ENCODE measurements at regions of chrX and their contacts with region 1.

Region 1: DNA sequence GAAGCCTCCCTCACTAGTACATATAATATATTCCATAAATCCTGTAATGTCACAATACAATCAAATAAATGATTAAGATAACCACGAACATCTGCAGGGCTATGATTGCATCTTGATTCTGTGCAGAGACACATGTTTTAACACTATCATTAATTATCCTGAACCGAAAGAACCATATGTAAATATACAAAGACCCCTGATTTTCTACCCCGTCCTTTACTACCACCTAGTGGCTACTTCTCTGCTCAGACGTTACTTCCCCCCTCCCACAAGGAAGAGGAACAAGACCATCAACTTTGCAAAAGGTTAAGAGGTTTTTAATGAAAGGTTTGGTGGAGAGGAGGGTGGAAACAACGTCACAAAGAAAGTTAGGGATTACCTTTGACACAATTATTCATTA is 134.0 kb downstream of the COL4A6 start:
- DNase-seq: no peak
- H3K4me3 ChIP-seq: no peak overlapping the region
- H3K27ac ChIP-seq: no peak overlapping the region
- H3K4me1 ChIP-seq: no peaks in the 10 kb centered on the region
- H3K27me3 ChIP-seq: no peaks in the 10 kb centered on the region
- CTCF ChIP-seq: peak in 2 of 4 experiments; percentile 20 to 24
- POLR2A ChIP-seq: no peak

Region 2: DNA sequence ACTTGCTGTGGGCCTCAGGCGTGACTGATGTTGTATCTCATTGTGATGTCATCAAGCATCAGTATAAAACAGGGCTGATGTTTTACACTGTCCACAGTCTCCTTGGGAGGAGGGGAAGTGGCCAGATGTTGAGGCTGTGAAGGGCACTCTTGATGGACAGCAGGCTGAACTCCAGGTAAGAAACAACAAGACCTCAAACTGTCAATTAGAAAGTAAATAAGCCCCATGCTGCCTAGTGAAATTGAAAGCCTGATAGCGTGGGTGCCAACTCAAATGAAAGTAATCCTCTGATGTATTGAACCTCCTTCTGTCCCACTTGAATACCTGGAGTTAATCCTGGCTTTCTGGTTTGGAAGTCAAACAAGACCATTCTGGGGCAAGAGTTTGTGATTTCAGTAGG is 239.6 kb before region 1 on chrX:
- intact Hi-C with region 1: no loop called
- DNase-seq: no peak
- H3K4me3 ChIP-seq: no peak overlapping the region
- H3K27ac ChIP-seq: no peak overlapping the region
- H3K4me1 ChIP-seq: no peaks in the 10 kb centered on the region
- H3K27me3 ChIP-seq: no peaks in the 10 kb centered on the region
- CTCF ChIP-seq: no peak
- POLR2A ChIP-seq: no peak

Region 3: DNA sequence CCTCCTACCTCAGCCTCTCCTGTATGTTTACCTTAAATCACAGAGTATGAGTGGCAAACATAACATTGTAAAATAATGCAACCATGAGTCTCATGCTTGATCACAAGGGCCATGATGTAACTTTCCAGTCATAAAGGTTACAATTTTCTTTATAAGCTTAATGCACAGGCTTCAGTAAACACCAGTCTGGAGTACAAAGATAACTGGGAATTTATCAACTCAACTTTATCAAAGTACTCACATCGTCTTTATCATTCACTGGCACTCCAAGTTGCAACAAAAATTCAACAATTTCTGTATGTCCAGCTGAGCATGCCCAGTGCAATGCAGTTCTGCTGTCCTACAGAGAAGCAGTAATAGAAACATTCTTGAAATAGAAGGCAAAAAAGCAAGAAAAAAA is 215.7 kb before region 1 on chrX:
- intact Hi-C with region 1: no loop called
- DNase-seq: no peak
- H3K4me3 ChIP-seq: no peak overlapping the region
- H3K27ac ChIP-seq: no peak overlapping the region
- H3K4me1 ChIP-seq: no peaks in the 10 kb centered on the region
- H3K27me3 ChIP-seq: no peaks in the 10 kb centered on the region
- CTCF ChIP-seq: no peak
- POLR2A ChIP-seq: no peak

Region 4: GRCh38 chrX:108439961-108440696 is 135.9 kb after region 1 on chrX:
- intact Hi-C with region 1: loop called (anchors 10 kb)
- DNase-seq: no peak
- H3K4me3 ChIP-seq: peak overlapping the region; percentile 39 to 40
- H3K27ac ChIP-seq: peak overlapping the region; percentile 70 to 71
- H3K4me1 ChIP-seq: no peaks in the 10 kb centered on the region
- H3K27me3 ChIP-seq: no peaks in the 10 kb centered on the region
- CTCF ChIP-seq: no peak
- POLR2A ChIP-seq: no peak